Right cardiac atrium (tissue), 5 donors: ENCODE measurements at regions of chr7 and their contacts with region 1.

Region 1: GRCh38 chr7:149090397-149091195 is at the start of gene ZNF786:
- DNase-seq: peak; percentile 92 to 96 (median 95)
- ATAC-seq: peak; percentile 97
- H3K4me3 ChIP-seq: peak within 1 kb of the TSS; percentile 82
- H3K27ac ChIP-seq: peak within 1 kb of the TSS; percentile 89
- H3K4me1 ChIP-seq: no peaks in the 10 kb centered on the region
- H3K27me3 ChIP-seq: no peaks in the 10 kb centered on the region
- total RNA-seq, gene ZNF786: 2.5 to 4.1 (median 3.3) TPM

Region 2: DNA sequence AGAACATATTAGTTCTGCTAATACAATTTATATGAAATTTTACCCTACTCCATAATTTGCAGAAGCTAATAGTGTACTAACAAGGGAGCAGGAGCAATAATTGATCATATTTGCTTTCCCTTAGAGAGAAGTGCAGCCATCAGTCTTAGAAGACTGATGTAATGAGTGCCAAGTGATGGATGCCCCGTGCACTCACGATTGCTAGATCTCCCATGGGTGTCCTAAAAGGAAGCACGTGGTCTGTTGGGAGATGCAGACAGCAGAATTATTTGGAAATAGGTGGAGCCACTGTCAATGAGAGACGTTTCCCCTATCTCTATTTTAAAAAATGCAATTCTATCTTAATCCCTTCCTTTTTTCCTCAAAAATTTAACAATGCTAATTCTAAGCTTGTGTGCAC is 1272.3 kb before region 1 on chr7:
- intact Hi-C with region 1: no loop called
- DNase-seq: no peak
- ATAC-seq: no peak
- H3K4me3 ChIP-seq: no peak overlapping the region
- H3K27ac ChIP-seq: no peak overlapping the region
- H3K4me1 ChIP-seq: no peaks in the 10 kb centered on the region
- H3K27me3 ChIP-seq: no peaks in the 10 kb centered on the region

Region 3: GRCh38 chr7:148972375-148972774 is 118.2 kb before region 1 on chr7:
- intact Hi-C with region 1: no loop called
- DNase-seq: no peak
- ATAC-seq: peak; percentile 21 to 41
- H3K4me3 ChIP-seq: no peak overlapping the region
- H3K27ac ChIP-seq: no peak overlapping the region
- H3K4me1 ChIP-seq: no peaks in the 10 kb centered on the region
- H3K27me3 ChIP-seq: no peaks in the 10 kb centered on the region

Region 4: DNA sequence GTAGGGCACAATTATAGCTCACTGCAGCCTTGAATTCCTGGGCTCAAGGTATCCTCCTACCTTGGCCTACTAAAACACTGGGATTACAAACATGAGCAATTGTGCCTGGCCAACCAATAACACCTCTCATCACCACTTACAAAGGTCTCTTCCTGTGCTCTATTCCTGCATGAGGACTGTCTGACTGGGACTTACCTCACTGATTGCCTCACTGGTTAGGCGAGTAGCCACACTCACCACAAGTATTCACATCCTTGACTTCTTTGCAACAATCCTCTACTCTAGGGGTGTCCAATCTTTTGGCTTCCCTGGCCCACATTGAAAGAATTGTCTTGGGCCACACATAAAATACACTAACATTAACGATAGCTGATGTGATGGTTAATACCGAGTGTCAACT is 39.7 kb before region 1 on chr7:
- intact Hi-C with region 1: no loop called
- DNase-seq: no peak
- ATAC-seq: no peak
- H3K4me3 ChIP-seq: no peak overlapping the region
- H3K27ac ChIP-seq: no peak overlapping the region
- H3K4me1 ChIP-seq: no peaks in the 10 kb centered on the region
- H3K27me3 ChIP-seq: no peaks in the 10 kb centered on the region

Region 5: GRCh38 chr7:149125863-149126661 is 35.5 kb after region 1 on chr7 and contains the start of gene ZNF425:
- intact Hi-C with region 1: loop called in 1 of 4 experiments (anchors 2 kb)
- DNase-seq: peak; percentile 94 to 98 (median 97)
- ATAC-seq: peak; percentile 95
- H3K4me3 ChIP-seq: peak within 1 kb of the TSS; percentile 45
- H3K27ac ChIP-seq: peak within 1 kb of the TSS; percentile 78
- H3K4me1 ChIP-seq: no peaks in the 10 kb centered on the region
- H3K27me3 ChIP-seq: no peaks in the 10 kb centered on the region
- total RNA-seq, gene ZNF425: 0.72 to 0.99 (median 0.81) TPM